PC-9 (cell line): ENCODE measurements at regions of chr7 and their contacts with region 1.

Region 1: DNA sequence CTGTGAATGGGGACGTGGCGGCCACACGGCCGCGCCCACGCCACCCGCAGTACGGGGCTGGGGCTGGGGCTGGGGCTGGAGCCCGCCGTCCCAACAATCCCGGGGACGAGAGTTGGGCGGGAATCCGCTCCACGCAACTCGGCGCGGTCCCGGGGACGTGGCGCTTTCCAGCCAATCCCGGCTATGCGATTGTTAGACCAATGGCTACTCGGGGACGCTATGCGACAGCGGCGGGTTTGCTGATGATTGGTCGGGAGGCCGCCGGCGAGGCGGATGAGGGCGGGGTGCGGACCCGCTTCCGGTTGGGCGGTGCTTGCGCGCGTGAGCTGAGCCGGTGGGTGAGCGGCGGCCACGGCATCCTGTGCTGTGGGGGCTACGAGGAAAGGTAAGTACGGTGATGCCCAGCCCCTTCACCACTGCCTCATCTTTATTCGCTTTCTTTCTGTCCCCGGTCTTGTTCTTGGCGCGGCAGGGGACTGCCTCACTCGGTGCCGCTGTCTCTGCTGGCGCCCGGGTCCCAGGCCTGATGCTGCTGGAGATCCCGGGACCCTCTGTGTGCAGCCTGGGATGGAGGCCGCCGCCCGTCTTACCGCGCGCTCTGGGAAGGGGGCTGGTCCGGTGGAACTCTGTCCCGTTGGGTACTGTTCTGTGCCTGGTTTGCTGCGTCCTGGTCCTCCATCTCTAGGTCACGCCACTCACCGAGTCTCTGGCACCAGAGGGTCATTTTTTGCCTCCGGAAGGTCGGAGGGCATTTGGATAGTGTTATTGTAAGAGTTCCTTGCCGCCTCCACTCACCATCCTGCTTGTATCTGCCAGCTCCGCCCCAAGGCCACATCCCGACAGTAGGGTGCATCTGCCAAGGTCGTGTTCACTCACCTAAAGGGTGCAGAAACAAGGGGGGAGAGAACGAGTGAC is at the start of gene CALU:
- DNase-seq: peak; percentile 90 to 97
- H3K4me3 ChIP-seq: peak within 1 kb of the TSS; percentile 83
- H3K27ac ChIP-seq: peak within 1 kb of the TSS; percentile 81
- H3K4me1 ChIP-seq: peaks cover 41% of the 10 kb centered on the region
- H3K27me3 ChIP-seq: no peaks in the 10 kb centered on the region
- CTCF ChIP-seq: no peak
- total RNA-seq, gene CALU: 109 and 152 TPM in 2 replicates

Region 2: GRCh38 chr7:128830231-128831177 is 91.2 kb after region 1 on chr7 and contains the start of gene FLNC:
- CTCF ChIA-PET with region 1: no interaction called
- POLR2A ChIA-PET with region 1: no interaction called
- intact Hi-C with region 1: loop called (anchors 1 kb)
- DNase-seq: peak in 1 of 2 experiments; percentile 60
- H3K4me3 ChIP-seq: peak within 1 kb of the TSS; percentile 54; the same call in 1 of the 2 replicates
- H3K27ac ChIP-seq: no peak within 1 kb of the TSS
- H3K4me1 ChIP-seq: peaks cover 52% of the 10 kb centered on the region
- H3K27me3 ChIP-seq: no peaks in the 10 kb centered on the region
- CTCF ChIP-seq: no peak
- total RNA-seq, gene FLNC: 75.5 and 96.6 TPM in 2 replicates

Region 3: DNA sequence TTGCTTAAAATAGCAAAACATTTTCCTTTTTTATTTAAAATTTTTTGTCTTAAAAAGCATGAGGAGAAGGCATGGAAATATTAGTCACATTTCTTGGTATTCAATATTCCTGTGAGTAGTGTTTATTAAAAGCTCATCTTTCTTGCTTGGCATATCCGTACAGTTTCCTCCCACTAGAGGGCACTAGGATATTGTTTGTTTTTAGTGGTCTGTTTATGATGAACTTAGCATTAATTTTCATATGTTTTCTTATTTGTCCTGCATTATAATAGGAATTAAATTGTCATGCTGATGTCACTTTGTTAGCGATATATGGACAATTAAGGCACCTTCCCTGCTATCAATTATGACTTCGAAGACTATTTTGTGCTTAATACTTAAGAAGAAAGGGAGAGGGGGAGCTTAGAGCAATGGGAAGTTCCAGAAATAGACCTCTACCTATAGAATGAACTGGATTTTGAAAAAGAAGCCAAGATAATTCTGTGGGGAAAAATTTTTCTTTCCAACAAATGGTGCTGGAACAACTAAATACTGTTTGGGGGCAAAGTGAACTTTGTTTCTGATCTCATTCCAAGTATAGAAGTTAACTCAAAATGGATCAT is 603.9 kb after region 1 on chr7:
- CTCF ChIA-PET with region 1: no interaction called
- POLR2A ChIA-PET with region 1: no interaction called
- intact Hi-C with region 1: no loop called
- DNase-seq: peak; percentile 9 to 52
- H3K4me3 ChIP-seq: no peak overlapping the region
- H3K27ac ChIP-seq: no peak overlapping the region
- H3K4me1 ChIP-seq: peaks cover 8% of the 10 kb centered on the region
- H3K27me3 ChIP-seq: no peaks in the 10 kb centered on the region
- CTCF ChIP-seq: peak; percentile 85